GM10248 (cell line): ENCODE measurements at regions of chr1 and their contacts with region 1.

Region 1: DNA sequence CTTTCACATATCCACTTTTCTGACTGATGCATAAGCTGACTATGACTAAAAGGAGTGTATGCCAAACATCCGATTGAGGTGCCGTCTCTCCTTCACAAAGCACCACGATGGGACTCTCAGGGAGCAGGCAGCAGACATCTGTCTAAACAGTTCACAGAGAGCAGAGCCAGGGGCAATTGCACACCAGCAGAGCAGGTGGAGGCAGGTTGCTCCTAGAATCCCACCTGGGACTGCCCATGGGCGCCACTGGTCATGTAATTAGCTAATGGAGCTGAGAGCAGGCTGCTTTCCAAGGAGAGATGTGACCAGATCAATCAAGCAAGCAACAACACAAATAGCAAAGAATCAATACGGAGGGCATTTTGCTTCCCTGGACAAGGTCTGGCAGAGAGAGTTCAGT is 30.5 kb upstream of the COA6 start:
- DNase-seq: no peak
- CTCF ChIP-seq: no peak

Region 2: DNA sequence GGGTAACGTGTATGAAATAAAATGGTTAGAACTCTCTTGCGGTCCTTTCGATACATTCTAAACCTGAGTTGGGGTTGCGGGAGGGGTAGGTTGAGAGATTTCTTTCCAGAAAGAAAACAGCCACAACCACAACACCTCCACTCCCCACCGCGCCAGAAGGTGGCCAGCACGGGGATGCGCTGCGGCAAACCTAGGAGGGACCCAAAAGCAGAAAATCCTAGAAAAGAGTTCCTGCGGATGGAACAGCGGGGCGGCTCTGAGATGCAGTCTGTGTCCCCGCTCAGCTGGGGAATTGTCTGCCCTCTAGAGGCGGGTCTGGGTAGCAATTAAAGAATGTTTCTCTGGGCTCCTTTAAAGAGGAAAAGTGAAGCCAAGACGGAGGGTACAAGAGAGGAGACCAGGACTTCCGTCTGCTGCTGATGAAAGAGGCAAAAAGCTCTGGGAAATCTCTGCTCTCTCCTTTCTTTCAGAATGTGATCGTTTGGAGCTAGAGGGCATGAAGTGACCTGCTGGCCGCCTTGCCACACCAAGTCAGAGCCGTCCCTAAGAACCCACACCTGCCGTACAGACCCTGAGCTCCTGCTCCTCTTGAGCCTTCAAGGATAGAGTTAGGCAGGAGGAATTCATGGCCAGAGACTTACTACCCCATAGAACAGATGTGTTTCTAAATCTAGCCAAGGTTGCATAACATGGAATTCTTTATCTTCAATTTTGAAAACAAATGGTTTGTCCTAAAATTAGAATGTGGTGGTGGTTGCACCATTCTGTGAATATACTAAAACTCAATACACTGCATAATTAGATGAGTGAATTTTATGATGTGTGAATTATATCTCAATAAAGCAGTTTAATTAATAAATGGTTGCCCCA is 16.0 kb before region 1 on chr1:
- CTCF ChIA-PET with region 1: interaction called, 18 read pairs
- POLR2A ChIA-PET with region 1: no interaction called
- DNase-seq: peak; percentile 73
- CTCF ChIP-seq: peak; percentile 87

Region 3: DNA sequence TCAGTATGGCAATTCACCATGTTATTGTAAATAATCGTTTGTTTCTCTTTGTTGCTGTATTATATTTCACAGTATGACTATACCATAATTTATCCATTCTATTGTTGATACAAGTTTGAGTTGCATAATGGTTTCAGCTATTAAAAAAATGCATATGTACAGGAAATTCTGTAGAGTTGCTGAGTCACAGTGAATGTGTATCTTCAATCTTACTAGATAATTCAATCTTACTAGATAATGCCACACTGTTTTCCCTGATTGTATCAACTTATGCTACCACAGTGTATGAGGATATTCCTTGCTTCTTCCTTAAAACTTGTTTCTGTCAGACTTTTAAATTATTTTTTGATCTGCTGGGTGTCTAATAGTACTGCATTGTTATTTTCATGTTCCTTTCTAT is 27.0 kb after region 1 on chr1:
- CTCF ChIA-PET with region 1: no interaction called
- POLR2A ChIA-PET with region 1: no interaction called
- DNase-seq: no peak
- CTCF ChIP-seq: no peak

Region 4: DNA sequence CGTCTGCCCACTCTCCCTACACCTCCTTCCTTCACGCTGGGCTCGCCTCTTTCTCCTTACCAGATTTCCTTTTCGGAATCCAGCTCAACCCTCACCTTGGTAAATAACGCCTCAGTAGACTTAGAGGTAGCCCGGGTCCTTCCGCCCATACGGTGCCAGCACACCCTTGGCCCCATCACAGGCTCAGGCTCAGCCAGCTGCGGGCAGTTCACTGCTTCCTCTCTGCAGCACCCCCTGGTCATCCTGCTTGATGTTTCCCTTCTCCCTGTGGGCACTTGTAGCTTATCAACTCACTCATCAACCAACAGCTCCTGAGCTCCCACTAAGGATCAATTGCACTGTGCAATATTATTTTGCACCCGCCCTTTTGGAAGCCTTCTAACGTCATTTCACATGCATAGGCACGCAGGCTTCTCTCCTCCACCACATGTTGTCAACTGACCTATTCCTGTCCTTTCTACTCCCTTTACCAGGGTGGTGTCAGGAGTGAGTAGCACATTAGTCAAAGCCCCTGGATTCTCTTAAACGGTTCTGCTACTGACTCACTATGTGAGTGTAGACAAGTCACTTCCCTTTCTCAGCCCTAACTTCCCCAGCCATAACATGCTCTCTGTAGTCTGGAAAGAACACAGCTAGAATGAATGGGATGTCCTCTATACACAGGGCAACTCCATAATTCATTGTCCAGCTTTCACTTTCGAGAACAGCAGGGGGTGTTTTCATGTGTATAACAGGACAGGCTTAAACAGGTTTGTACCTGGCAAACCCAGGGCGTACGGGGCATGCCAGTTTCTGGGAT is 314.3 kb after region 1 on chr1:
- CTCF ChIA-PET with region 1: no interaction called
- POLR2A ChIA-PET with region 1: no interaction called
- DNase-seq: peak; percentile 51
- CTCF ChIP-seq: no peak